Posterior cingulate gyrus (tissue), 11 donors: ENCODE measurements at regions of chr21 and their contacts with region 1.

Region 1: DNA sequence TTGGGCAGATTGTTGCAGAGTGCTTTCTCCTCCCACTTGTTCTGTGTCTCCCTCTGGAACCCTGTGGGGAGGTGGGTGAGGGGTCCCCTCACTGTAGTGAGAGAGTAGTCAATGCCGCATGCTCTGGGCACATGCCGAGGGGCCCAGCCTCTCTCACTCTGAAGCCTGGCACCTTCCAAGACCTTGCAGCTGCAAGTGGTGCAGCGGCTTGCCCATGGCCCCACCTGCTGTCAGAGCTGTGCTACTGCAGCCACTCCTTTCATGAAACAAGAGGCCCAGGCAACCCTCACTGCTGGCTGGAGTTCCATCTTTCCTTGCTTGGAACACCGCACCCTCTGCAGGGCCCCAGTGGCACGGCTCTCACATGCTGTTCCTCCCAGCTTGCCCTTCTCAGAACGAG is 58.4 kb upstream of the COL6A1 start:
- DNase-seq: peak; percentile 70 to 98 (median 82)

Region 2: GRCh38 chr21:45880097-45881068 is 42.8 kb before region 1 on chr21:
- intact Hi-C with region 1: loop called (anchors 2 kb)
- DNase-seq: peak in 8 of 10 donors; percentile 45 to 93 (median 68)